ENCODE measurements at regions of chr1 and their contacts with region 1.

Region 1: GRCh38 chr1:167599957-167600581 is 30.0 kb upstream of the RCSD1 start:
- DNase-seq: peak; percentile 21
- H3K4me3 ChIP-seq: no peak overlapping the region
- H3K27ac ChIP-seq: peak overlapping the region in 3 of 4 donors; percentile 35 to 61 (median 48)
- H3K4me1 ChIP-seq: peaks cover 9 to 27% (median 19%) of the 10 kb centered on the region in 4 donors
- H3K27me3 ChIP-seq: no peaks in the 10 kb centered on the region
- CTCF ChIP-seq: peak; percentile 49 to 67 (median 55)
- EP300 ChIP-seq: no peak
- POLR2A ChIP-seq: no peak

Region 2: GRCh38 chr1:167687919-167688519 is 88.0 kb after region 1 on chr1:
- in situ Hi-C with region 1: loop called in 3 of 4 experiments (anchors 5 kb)
- intact Hi-C with region 1: loop called (anchors 1 kb)
- DNase-seq: peak; percentile 84
- H3K4me3 ChIP-seq: no peak overlapping the region
- H3K27ac ChIP-seq: no peak overlapping the region
- H3K4me1 ChIP-seq: peaks cover 0 to 33% (median 10%) of the 10 kb centered on the region in 4 donors
- H3K27me3 ChIP-seq: no peaks in the 10 kb centered on the region
- CTCF ChIP-seq: peak; percentile 82 to 96 (median 94)
- EP300 ChIP-seq: no peak
- POLR2A ChIP-seq: no peak

Region 3: GRCh38 chr1:167693126-167694055 is 93.3 kb after region 1 on chr1:
- in situ Hi-C with region 1: loop called in 2 of 4 experiments (anchors 5 kb)
- intact Hi-C with region 1: loop called (anchors 1 kb)
- DNase-seq: no peak
- H3K4me3 ChIP-seq: no peak overlapping the region
- H3K27ac ChIP-seq: no peak overlapping the region
- H3K4me1 ChIP-seq: peaks cover 0 to 6% (median 3%) of the 10 kb centered on the region in 4 donors
- H3K27me3 ChIP-seq: no peaks in the 10 kb centered on the region
- CTCF ChIP-seq: no peak
- EP300 ChIP-seq: no peak
- POLR2A ChIP-seq: no peak